ENCODE measurements at regions of chr18 and their contacts with region 1.

Region 1: DNA sequence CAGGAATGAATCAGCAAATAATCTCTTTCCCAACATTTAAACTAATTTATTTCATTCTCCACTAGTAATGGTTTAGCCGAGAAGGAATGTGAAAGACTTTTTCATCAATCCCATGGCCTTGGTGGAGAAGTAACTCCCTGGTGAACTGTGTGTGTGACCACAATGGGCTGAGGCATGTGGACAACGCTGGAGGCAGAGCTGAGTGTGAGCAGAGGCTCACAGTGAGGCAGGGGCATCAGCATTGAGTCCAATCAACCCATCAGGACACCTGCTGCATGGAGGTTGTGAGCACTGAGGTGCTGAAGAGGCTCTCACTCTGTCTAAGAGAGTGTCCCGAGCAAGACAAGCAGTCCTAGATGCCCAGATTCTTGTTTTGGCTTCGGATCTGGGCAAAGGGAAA is 78.6 kb downstream of the ZNF519 start:
- DNase-seq: no peak
- ATAC-seq: no peak
- H3K4me3 ChIP-seq: no peak overlapping the region
- H3K27ac ChIP-seq: no peak overlapping the region
- H3K4me1 ChIP-seq: no peaks in the 10 kb centered on the region
- H3K27me3 ChIP-seq: no peaks in the 10 kb centered on the region
- CTCF ChIP-seq: no peak
- POLR2A ChIP-seq: no peak

Region 2: DNA sequence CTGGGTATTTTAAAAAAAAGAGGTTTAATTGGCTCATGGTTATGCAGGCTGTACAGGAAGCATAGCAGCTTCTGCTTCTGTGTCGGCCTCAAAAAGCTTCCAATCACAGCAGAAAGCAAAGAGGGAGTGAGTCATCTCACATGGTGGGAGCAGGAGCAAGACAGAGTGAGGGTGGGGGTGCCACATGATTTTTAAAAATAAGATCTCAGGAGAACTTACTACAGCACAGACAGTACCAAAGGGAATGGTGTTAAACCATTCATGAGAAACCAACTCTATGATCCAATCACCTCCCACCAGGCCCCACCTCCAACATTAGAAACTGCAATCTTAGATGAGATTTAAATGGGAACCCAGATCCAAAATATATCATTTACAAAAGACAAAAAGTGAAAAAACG is 63.9 kb after region 1 on chr18:
- intact Hi-C with region 1: loop called in 1 of 2 experiments (anchors 10 kb)
- DNase-seq: no peak
- ATAC-seq: no peak
- H3K4me3 ChIP-seq: no peak overlapping the region
- H3K27ac ChIP-seq: no peak overlapping the region
- H3K4me1 ChIP-seq: no peaks in the 10 kb centered on the region
- H3K27me3 ChIP-seq: no peaks in the 10 kb centered on the region
- CTCF ChIP-seq: no peak
- POLR2A ChIP-seq: no peak

Measured in right lobe of liver (tissue), 6 donors.